ENCODE measurements at regions of chr3 and their contacts with region 1.

Region 1: DNA sequence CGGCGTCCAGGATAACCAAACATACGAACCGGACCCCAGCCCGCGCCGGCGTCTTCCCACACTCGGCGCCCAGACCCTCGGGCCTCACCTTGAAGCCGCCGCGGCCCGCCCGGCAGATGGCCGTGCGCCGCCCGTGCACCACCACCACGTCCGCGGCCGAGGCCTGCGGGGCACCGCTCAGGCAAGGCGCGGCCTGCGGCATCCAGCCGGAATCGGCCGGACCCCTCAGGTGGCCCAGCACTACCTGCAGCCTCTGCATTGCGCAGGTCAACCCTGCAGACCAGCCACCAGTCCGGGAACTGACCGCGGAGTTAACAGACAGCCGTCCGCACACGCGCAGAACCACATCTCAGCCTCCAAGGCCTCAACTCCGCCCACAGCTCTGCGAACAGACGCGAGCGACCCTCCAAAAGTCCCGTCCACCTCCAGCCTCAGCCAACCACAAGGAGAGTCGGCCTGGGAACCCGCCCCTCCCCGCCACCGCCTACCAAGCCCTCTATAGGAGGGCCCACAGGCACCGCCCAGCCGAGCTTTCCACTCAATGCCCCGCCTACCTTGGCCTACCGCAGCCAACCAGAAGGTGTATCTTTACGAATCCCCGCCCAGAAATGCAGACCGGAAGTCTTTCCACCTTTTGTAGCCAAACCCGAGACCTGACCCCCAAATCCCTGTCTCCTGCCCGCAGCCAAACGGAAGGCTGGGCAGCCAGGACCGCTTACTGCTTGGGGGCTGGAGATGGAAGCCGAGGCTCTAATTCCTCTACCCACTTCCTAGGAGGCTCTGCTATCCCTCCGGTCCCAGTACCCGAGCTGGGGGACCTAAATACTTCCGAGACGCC is at the start of gene ACAA1:
- DNase-seq: peak; percentile 90
- ATAC-seq: peak; percentile 92
- H3K4me3 Mint-ChIP-seq: peak within 1 kb of the TSS; percentile 97
- H3K27ac Mint-ChIP-seq: peak within 1 kb of the TSS; percentile 99
- H3K4me1 Mint-ChIP-seq: peaks cover 66% of the 10 kb centered on the region
- H3K27me3 Mint-ChIP-seq: no peaks in the 10 kb centered on the region
- CTCF ChIP-seq: no peak
- total RNA-seq, gene ACAA1: 78.1 and 79.6 TPM in 2 replicates

Region 2: DNA sequence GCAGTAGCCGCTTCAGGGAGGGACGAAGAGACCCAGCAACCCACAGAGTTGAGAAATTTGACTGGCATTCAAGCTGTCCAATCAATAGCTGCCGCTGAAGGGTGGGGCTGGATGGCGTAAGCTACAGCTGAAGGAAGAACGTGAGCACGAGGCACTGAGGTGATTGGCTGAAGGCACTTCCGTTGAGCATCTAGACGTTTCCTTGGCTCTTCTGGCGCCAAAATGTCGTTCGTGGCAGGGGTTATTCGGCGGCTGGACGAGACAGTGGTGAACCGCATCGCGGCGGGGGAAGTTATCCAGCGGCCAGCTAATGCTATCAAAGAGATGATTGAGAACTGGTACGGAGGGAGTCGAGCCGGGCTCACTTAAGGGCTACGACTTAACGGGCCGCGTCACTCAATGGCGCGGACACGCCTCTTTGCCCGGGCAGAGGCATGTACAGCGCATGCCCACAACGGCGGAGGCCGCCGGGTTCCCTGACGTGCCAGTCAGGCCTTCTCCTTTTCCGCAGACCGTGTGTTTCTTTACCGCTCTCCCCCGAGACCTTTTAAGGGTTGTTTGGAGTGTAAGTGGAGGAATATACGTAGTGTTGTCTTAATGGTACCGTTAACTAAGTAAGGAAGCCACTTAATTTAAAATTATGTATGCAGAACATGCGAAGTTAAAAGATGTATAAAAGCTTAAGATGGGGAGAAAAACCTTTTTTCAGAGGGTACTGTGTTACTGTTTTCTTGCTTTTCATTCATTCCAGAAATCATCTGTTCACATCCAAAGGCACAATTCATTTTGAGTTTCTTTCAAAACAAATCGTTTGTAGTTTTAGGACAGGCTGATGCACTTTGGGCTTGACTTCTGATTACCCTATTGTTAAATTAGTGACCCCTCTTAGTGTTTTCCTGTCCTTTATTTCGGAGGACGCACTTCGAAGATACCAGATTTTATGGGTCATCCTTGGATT is 1143.4 kb before region 1 on chr3 and contains the start of gene MLH1:
- CTCF ChIA-PET with region 1: no interaction called
- POLR2A ChIA-PET with region 1: interaction called, 4 read pairs
- intact Hi-C with region 1: loop called (anchors 2 kb)
- DNase-seq: peak; percentile 90
- ATAC-seq: peak; percentile 86
- H3K4me3 Mint-ChIP-seq: no peak within 1 kb of the TSS
- H3K27ac Mint-ChIP-seq: no peak within 1 kb of the TSS
- H3K4me1 Mint-ChIP-seq: peaks cover 29% of the 10 kb centered on the region
- H3K27me3 Mint-ChIP-seq: no peaks in the 10 kb centered on the region
- CTCF ChIP-seq: no peak
- total RNA-seq, gene MLH1: 45.8 and 46.2 TPM in 2 replicates

Region 3: DNA sequence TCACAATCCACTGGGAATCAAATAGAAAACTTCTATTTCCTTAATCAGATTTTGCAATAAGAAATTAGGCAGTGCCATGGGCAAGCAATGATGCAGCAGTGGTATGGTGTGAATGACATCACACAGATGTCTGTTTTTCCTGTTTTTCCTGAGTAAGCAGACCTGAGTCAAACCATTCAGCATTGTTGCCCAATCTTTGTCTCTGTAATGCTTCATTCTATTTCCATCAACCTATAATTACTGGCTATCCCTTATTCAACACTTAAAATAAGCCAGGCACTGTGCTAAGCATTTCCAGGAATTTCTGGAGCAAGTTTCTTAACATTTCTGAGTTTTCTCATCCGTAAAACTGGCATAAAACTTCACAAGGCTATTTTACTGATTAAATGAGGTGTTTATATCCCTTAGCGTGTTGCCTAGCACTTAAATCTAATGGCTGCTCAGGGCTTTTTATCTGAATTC is 17.1 kb after region 1 on chr3:
- CTCF ChIA-PET with region 1: no interaction called
- POLR2A ChIA-PET with region 1: interaction called, 5 read pairs
- intact Hi-C with region 1: loop called (anchors 1 kb)
- DNase-seq: no peak
- ATAC-seq: no peak
- H3K4me3 Mint-ChIP-seq: no peak overlapping the region
- H3K27ac Mint-ChIP-seq: no peak overlapping the region
- H3K4me1 Mint-ChIP-seq: peaks cover 59% of the 10 kb centered on the region
- H3K27me3 Mint-ChIP-seq: no peaks in the 10 kb centered on the region
- CTCF ChIP-seq: no peak

Region 4: GRCh38 chr3:38210141-38210757 is 73.3 kb after region 1 on chr3:
- CTCF ChIA-PET with region 1: no interaction called
- POLR2A ChIA-PET with region 1: interaction called, 7 read pairs
- intact Hi-C with region 1: loop called (anchors 2 kb)
- DNase-seq: no peak
- ATAC-seq: peak; percentile 86
- H3K4me3 Mint-ChIP-seq: no peak overlapping the region
- H3K27ac Mint-ChIP-seq: peak overlapping the region; percentile 82
- H3K4me1 Mint-ChIP-seq: peaks cover 63% of the 10 kb centered on the region
- H3K27me3 Mint-ChIP-seq: no peaks in the 10 kb centered on the region
- CTCF ChIP-seq: no peak

Region 5: DNA sequence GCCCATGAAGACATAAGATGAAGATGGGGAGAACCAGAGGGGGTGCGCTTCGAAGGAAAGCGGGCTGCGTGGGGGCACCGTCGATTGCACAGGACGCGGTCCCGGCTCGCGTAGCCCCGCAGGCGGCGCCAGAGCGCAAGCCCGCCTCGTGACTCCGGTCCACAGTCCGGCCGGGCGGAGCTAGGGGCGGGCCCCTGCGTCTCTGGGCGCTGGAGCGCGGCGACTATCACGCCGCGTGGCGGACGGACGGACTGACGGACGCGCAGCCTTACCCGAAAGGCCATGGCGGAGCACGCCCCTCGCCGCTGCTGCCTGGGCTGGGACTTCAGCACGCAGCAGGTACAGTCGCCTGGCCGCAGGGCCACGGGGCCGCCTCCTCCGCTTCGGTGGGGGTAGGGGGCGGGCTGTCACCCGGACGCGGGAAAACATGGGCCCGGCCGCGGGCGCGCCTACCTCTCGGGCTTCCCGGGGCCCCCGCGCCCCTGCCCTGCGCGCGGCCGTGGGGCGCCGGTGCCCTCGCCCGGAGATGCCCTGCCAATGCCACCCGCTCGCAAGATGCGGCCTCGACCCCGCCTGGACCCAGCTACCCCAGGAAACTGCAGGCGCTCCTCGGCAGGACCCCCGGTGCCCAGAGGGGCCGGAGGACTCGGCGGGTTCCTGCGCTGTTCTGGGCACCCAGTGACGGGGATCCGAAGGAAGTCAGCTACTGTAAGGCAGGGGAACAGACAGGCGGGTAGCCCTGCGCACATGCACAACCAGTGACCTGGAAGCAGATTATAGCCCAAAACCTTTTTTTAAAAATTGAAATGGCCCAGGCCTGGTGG is 209.8 kb after region 1 on chr3 and contains the start of gene XYLB:
- CTCF ChIA-PET with region 1: interaction called, 3 read pairs
- POLR2A ChIA-PET with region 1: interaction called, 10 read pairs
- intact Hi-C with region 1: loop called (anchors 2 kb)
- DNase-seq: peak; percentile 72
- ATAC-seq: peak; percentile 97
- H3K4me3 Mint-ChIP-seq: peak within 1 kb of the TSS; percentile 81
- H3K27ac Mint-ChIP-seq: no peak within 1 kb of the TSS
- H3K4me1 Mint-ChIP-seq: peaks cover 4% of the 10 kb centered on the region
- H3K27me3 Mint-ChIP-seq: no peaks in the 10 kb centered on the region
- CTCF ChIP-seq: no peak
- total RNA-seq, gene XYLB: 1.3 and 1.8 TPM in 2 replicates

Region 6: DNA sequence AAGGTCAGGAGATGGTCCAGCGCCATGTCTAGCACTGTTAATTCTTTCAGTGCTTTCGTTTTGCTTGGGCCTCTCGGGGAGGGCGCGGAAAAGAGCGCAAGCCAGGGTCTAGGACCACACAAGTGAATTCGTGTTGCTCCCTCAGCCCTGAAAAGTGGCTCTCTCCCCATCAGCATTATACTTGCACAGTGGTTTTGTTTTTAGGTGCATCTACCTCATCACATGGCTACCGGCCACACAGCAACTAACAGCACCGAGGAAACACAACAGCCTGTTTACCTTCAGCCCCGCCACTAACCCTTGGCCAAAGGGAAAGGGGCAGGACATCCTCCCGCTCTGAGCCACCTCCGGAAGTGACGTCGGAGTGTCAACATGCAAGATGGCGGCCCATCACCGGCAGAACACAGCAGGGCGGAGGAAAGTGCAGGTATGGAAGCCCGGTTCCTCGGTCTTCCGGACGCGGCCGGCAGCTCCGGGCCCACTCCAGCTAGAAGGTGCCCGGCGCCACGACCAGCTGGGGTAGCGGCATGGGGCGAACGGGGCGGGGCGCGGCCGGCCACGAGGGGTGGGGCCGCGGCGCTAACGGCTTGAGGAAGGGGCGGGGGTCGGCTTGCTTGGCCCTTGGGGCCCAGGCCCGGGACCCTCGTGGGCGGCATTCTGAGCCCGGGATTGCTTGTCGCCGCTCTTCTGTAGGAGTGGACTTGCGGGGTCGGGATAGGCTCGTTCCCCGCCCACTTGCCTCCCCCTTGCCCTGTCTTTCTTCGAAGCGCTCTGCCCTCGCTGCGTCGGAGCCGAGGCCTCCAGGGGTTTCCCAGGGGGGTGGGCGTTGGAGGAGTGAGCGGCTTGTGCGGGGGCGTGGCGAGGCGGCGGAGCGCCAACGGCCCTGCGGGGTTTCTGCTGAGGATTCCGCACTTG is 914.9 kb after region 1 on chr3 and contains the starts of genes SCN11A and WDR48:
- CTCF ChIA-PET with region 1: no interaction called
- POLR2A ChIA-PET with region 1: no interaction called
- intact Hi-C with region 1: loop called (anchors 1 kb)
- DNase-seq: peak; percentile 80
- ATAC-seq: peak; percentile 94
- H3K4me3 Mint-ChIP-seq: peak within 1 kb of the TSS; percentile 97
- H3K27ac Mint-ChIP-seq: peak within 1 kb of the TSS; percentile 98
- H3K4me1 Mint-ChIP-seq: peaks cover 39% of the 10 kb centered on the region
- H3K27me3 Mint-ChIP-seq: no peaks in the 10 kb centered on the region
- CTCF ChIP-seq: no peak
- total RNA-seq, gene SCN11A: 0.16 and 0.20 TPM in 2 replicates
- total RNA-seq, gene WDR48: 47.7 and 48.9 TPM in 2 replicates

Region 7: GRCh38 chr3:39406368-39407258 is 1269.6 kb after region 1 on chr3 and contains the start of gene RPSA:
- CTCF ChIA-PET with region 1: no interaction called
- POLR2A ChIA-PET with region 1: interaction called, 5 read pairs
- intact Hi-C with region 1: loop called (anchors 2 kb)
- DNase-seq: peak; percentile 80
- ATAC-seq: peak; percentile 90
- H3K4me3 Mint-ChIP-seq: peak within 1 kb of the TSS; percentile 94
- H3K27ac Mint-ChIP-seq: peak within 1 kb of the TSS; percentile 96
- H3K4me1 Mint-ChIP-seq: peaks cover 48% of the 10 kb centered on the region
- H3K27me3 Mint-ChIP-seq: no peaks in the 10 kb centered on the region
- CTCF ChIP-seq: no peak
- total RNA-seq, gene RPSA: 2,697 and 2,952 TPM in 2 replicates

Measured in activated B cell treated with CpG ODN at 0.5 μM for 24 hours (primary cell).